Upper lobe of right lung (tissue), 1 donor: ENCODE measurements at regions of chr12 and their contacts with region 1.

Region 1: GRCh38 chr12:53065975-53066931 is 12.9 kb downstream of the SPRYD3 start:
- DNase-seq: peak; percentile 85
- ATAC-seq: peak; percentile 74
- H3K4me3 ChIP-seq: no peak overlapping the region
- H3K27ac ChIP-seq: peak overlapping the region; percentile 8
- H3K4me1 ChIP-seq: peaks cover 44% of the 10 kb centered on the region
- H3K27me3 ChIP-seq: no peaks in the 10 kb centered on the region
- CTCF ChIP-seq: peak; percentile 92

Region 2: GRCh38 chr12:52860063-52860823 is 206.0 kb before region 1 on chr12:
- intact Hi-C with region 1: no loop called
- DNase-seq: no peak
- ATAC-seq: peak; percentile 88
- H3K4me3 ChIP-seq: no peak overlapping the region
- H3K27ac ChIP-seq: no peak overlapping the region
- H3K4me1 ChIP-seq: no peaks in the 10 kb centered on the region
- H3K27me3 ChIP-seq: peaks cover 3% of the 10 kb centered on the region
- CTCF ChIP-seq: no peak

Region 3: GRCh38 chr12:53102883-53103807 is 36.9 kb after region 1 on chr12 and contains the start of gene SOAT2:
- intact Hi-C with region 1: loop called (anchors 5 kb)
- DNase-seq: no peak
- ATAC-seq: no peak
- H3K4me3 ChIP-seq: no peak within 1 kb of the TSS
- H3K27ac ChIP-seq: no peak within 1 kb of the TSS
- H3K4me1 ChIP-seq: peaks cover 13% of the 10 kb centered on the region
- H3K27me3 ChIP-seq: no peaks in the 10 kb centered on the region
- CTCF ChIP-seq: no peak
- total RNA-seq, gene SOAT2: not detected